B cell (primary cell): ENCODE measurements at regions of chr19 and their contacts with region 1.

Region 1: GRCh38 chr19:2151339-2152229 is at the start of gene AP3D1:
- DNase-seq: peak; percentile 100
- ATAC-seq: peak; percentile 91
- H3K4me3 ChIP-seq: peak within 1 kb of the TSS; percentile 64 to 95 (median 82)
- H3K4me3 Mint-ChIP-seq: peak within 1 kb of the TSS; percentile 83
- H3K27ac ChIP-seq: peak within 1 kb of the TSS; percentile 18 to 90
- H3K27ac Mint-ChIP-seq: peak within 1 kb of the TSS; percentile 90
- H3K4me1 ChIP-seq: peaks cover 18 to 36% of the 10 kb centered on the region in 2 donors
- H3K4me1 Mint-ChIP-seq: peaks cover 37% of the 10 kb centered on the region
- H3K27me3 ChIP-seq: no peaks in the 10 kb centered on the region
- H3K27me3 Mint-ChIP-seq: no peaks in the 10 kb centered on the region
- CTCF ChIP-seq: no peak
- total RNA-seq, gene AP3D1: 96.4 and 108 TPM in 2 replicates

Region 2: GRCh38 chr19:1992759-1993260 is 158.8 kb before region 1 on chr19:
- CTCF ChIA-PET with region 1: no interaction called
- POLR2A ChIA-PET with region 1: no interaction called
- intact Hi-C with region 1: no loop called
- DNase-seq: no peak
- ATAC-seq: no peak
- H3K4me3 ChIP-seq: no peak overlapping the region
- H3K4me3 Mint-ChIP-seq: no peak overlapping the region
- H3K27ac ChIP-seq: no peak overlapping the region
- H3K27ac Mint-ChIP-seq: no peak overlapping the region
- H3K4me1 ChIP-seq: no peaks in the 10 kb centered on the region
- H3K4me1 Mint-ChIP-seq: peaks cover 5% of the 10 kb centered on the region
- H3K27me3 ChIP-seq: no peaks in the 10 kb centered on the region
- H3K27me3 Mint-ChIP-seq: no peaks in the 10 kb centered on the region
- CTCF ChIP-seq: no peak

Region 3: GRCh38 chr19:2016041-2016807 is 135.4 kb before region 1 on chr19:
- CTCF ChIA-PET with region 1: interaction called, 8 read pairs
- POLR2A ChIA-PET with region 1: no interaction called
- intact Hi-C with region 1: loop called (anchors 1 kb)
- DNase-seq: peak; percentile 67
- ATAC-seq: peak; percentile 72
- H3K4me3 ChIP-seq: peak overlapping the region in 3 of 5 experiments; percentile 28 to 44 (median 39)
- H3K4me3 Mint-ChIP-seq: peak overlapping the region; percentile 47
- H3K27ac ChIP-seq: peak overlapping the region in 1 of 2 donors; percentile 7
- H3K27ac Mint-ChIP-seq: peak overlapping the region; percentile 41
- H3K4me1 ChIP-seq: peaks cover 15 to 24% of the 10 kb centered on the region in 2 donors
- H3K4me1 Mint-ChIP-seq: peaks cover 25% of the 10 kb centered on the region
- H3K27me3 ChIP-seq: no peaks in the 10 kb centered on the region
- H3K27me3 Mint-ChIP-seq: no peaks in the 10 kb centered on the region
- CTCF ChIP-seq: no peak

Region 4: DNA sequence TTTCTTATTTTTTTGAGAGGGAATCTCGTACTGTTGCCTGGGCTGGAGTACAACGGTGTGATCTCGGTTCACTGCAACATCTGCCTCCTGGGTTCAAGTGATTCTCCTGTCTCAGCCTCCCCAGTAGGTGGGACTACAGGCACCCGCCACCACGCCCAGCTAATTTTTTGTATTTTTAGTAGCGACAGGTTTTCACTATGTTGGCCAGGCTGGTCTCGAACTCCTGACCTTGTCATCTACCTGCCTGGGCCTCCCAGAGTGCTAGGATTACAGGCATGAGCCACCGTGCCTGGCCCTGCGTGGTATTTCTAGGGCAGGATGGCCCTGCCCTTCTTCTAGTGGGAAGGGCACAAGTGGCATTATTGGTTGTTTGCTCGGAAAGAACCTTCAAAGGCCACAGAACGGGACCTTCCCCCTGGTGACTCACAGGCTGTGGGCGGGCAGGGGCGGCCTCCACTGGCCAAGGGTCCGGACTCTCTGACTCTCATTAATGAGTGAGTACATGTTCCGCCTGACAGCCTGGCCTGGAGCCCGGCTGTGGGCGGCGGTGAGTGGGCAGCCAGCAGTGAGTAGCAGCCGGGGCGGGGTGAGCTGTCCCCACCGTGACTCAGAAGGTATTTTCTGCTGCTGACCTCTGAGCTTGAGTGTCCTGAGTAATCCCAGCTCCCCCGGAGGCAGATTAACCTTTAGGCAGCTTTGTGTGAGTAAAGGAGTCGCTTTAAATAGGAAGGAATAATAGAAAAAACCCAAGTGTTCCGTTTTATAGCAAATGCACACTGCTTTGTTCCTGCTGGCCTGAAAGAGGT is 17.2 kb after region 1 on chr19:
- CTCF ChIA-PET with region 1: interaction called, 22 read pairs
- POLR2A ChIA-PET with region 1: interaction called, 4 read pairs
- intact Hi-C with region 1: loop called (anchors 2 kb)
- DNase-seq: peak; percentile 81
- ATAC-seq: peak; percentile 44
- H3K4me3 ChIP-seq: peak overlapping the region; percentile 16 to 64 (median 37)
- H3K4me3 Mint-ChIP-seq: peak overlapping the region; percentile 88
- H3K27ac ChIP-seq: peak overlapping the region; percentile 90 to 95
- H3K27ac Mint-ChIP-seq: peak overlapping the region; percentile 95
- H3K4me1 ChIP-seq: peaks cover 66 to 88% of the 10 kb centered on the region in 2 donors
- H3K4me1 Mint-ChIP-seq: peaks cover 69% of the 10 kb centered on the region
- H3K27me3 ChIP-seq: no peaks in the 10 kb centered on the region
- H3K27me3 Mint-ChIP-seq: no peaks in the 10 kb centered on the region
- CTCF ChIP-seq: no peak

Region 5: GRCh38 chr19:2221918-2222317 is 70.3 kb after region 1 on chr19:
- CTCF ChIA-PET with region 1: interaction called, 13 read pairs
- POLR2A ChIA-PET with region 1: interaction called, 4 read pairs
- intact Hi-C with region 1: no loop called
- DNase-seq: no peak
- ATAC-seq: no peak
- H3K4me3 ChIP-seq: no peak overlapping the region
- H3K4me3 Mint-ChIP-seq: no peak overlapping the region
- H3K27ac ChIP-seq: no peak overlapping the region
- H3K27ac Mint-ChIP-seq: no peak overlapping the region
- H3K4me1 ChIP-seq: peaks cover 16 to 25% of the 10 kb centered on the region in 2 donors
- H3K4me1 Mint-ChIP-seq: peaks cover 29% of the 10 kb centered on the region
- H3K27me3 ChIP-seq: no peaks in the 10 kb centered on the region
- H3K27me3 Mint-ChIP-seq: no peaks in the 10 kb centered on the region
- CTCF ChIP-seq: no peak

Region 6: DNA sequence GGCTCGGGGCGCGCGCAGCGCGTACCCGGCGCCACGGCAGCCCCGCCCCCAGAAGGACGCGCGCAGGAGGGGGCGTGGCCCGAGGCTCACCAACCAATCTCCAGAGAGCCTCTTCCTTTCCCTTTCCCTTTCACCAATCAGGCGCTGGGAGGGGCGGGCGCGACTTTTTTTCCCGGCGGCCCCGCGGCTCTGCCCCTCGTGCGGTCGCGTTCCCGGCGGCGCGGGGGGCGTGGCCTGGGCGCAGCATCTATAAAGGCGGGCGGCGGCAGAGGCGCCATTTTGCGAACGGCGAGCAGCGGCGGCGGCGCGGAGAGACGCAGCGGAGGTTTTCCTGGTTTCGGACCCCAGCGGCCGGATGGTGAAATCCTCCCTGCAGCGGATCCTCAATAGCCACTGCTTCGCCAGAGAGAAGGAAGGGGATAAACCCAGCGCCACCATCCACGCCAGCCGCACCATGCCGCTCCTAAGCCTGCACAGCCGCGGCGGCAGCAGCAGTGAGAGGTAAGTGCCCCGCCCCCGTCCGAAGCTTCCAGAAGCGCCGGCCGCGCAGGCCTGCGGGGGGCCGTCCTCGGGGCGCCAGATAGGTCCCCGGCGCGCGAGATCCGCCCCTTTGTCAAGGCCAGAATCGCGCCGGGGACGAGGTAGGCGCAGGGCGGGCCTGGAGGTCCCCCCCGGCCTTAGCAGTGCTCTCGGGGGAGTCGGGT is 117.8 kb after region 1 on chr19:
- CTCF ChIA-PET with region 1: interaction called, 12 read pairs
- POLR2A ChIA-PET with region 1: interaction called, 5 read pairs
- intact Hi-C with region 1: loop called (anchors 1 kb)
- DNase-seq: peak; percentile 99
- ATAC-seq: peak; percentile 66
- H3K4me3 ChIP-seq: peak overlapping the region; percentile 59 to 100 (median 99)
- H3K4me3 Mint-ChIP-seq: peak overlapping the region; percentile 89
- H3K27ac ChIP-seq: peak overlapping the region; percentile 79 to 94
- H3K27ac Mint-ChIP-seq: peak overlapping the region; percentile 97
- H3K4me1 ChIP-seq: peaks cover 56 to 66% of the 10 kb centered on the region in 2 donors
- H3K4me1 Mint-ChIP-seq: peaks cover 52% of the 10 kb centered on the region
- H3K27me3 ChIP-seq: no peaks in the 10 kb centered on the region
- H3K27me3 Mint-ChIP-seq: no peaks in the 10 kb centered on the region
- CTCF ChIP-seq: no peak

Region 7: GRCh38 chr19:2280633-2281264 is 129.2 kb after region 1 on chr19:
- CTCF ChIA-PET with region 1: no interaction called
- POLR2A ChIA-PET with region 1: no interaction called
- intact Hi-C with region 1: no loop called
- DNase-seq: no peak
- ATAC-seq: no peak
- H3K4me3 ChIP-seq: no peak overlapping the region
- H3K4me3 Mint-ChIP-seq: no peak overlapping the region
- H3K27ac ChIP-seq: no peak overlapping the region
- H3K27ac Mint-ChIP-seq: no peak overlapping the region
- H3K4me1 ChIP-seq: peaks cover 16 to 35% of the 10 kb centered on the region in 2 donors
- H3K4me1 Mint-ChIP-seq: peaks cover 28% of the 10 kb centered on the region
- H3K27me3 ChIP-seq: no peaks in the 10 kb centered on the region
- H3K27me3 Mint-ChIP-seq: no peaks in the 10 kb centered on the region
- CTCF ChIP-seq: no peak

Region 8: DNA sequence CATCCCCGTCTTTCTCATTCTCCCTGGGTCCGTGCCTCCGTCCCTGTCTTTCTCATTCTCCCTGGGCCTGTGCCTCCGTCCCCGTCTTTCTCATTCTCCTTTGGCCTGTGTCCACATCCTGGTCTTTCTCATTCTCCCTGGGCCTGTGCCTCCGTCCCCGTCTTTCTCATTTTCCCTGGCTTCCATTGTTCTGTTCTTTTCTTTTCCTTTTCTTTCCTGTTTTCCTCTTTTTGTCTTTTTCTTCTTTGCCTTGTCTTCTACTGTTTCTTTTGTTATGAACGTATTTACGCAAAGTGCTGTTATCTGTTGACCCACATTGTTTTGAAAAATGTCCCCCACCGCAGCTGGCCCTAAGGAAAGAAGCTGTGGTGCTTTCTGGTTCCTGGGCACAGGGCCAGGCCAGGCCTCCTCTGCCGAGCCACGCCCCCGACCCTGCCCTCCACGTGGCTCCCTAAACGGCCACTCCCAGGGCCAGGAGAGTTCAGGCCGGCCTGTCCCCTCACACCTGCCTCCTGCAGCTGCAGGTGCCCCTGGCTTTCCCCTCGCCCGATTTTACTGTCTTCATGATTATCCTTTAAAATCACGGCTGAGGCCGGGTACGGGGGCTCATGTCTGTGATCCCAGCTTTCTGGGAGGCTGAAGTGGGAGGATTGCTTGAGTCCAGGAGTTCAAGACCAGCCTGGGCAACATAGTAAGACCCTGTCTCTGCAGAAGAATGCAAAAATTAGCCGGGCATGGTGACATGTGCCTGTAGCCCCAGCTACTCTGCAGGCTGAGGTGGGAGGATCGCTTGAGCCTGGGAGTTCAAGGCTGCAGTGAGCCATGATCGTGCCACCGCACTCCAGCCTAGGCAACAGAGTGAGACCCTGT is 194.4 kb after region 1 on chr19:
- CTCF ChIA-PET with region 1: no interaction called
- POLR2A ChIA-PET with region 1: no interaction called
- intact Hi-C with region 1: no loop called
- DNase-seq: no peak
- ATAC-seq: no peak
- H3K4me3 ChIP-seq: no peak overlapping the region
- H3K4me3 Mint-ChIP-seq: no peak overlapping the region
- H3K27ac ChIP-seq: no peak overlapping the region
- H3K27ac Mint-ChIP-seq: peak overlapping the region; percentile 6
- H3K4me1 ChIP-seq: no peaks in the 10 kb centered on the region
- H3K4me1 Mint-ChIP-seq: no peaks in the 10 kb centered on the region
- H3K27me3 ChIP-seq: no peaks in the 10 kb centered on the region
- H3K27me3 Mint-ChIP-seq: no peaks in the 10 kb centered on the region
- CTCF ChIP-seq: no peak

Region 9: GRCh38 chr19:2380567-2380966 is 229.0 kb after region 1 on chr19:
- CTCF ChIA-PET with region 1: no interaction called
- POLR2A ChIA-PET with region 1: no interaction called
- intact Hi-C with region 1: no loop called
- DNase-seq: no peak
- ATAC-seq: no peak
- H3K4me3 ChIP-seq: no peak overlapping the region
- H3K4me3 Mint-ChIP-seq: no peak overlapping the region
- H3K27ac ChIP-seq: no peak overlapping the region
- H3K27ac Mint-ChIP-seq: no peak overlapping the region
- H3K4me1 ChIP-seq: peaks cover 6 to 11% of the 10 kb centered on the region in 2 donors
- H3K4me1 Mint-ChIP-seq: peaks cover 11% of the 10 kb centered on the region
- H3K27me3 ChIP-seq: peaks cover 0 to 5% (median 0%) of the 10 kb centered on the region in 4 experiments
- H3K27me3 Mint-ChIP-seq: no peaks in the 10 kb centered on the region
- CTCF ChIP-seq: no peak

Region 10: GRCh38 chr19:2391118-2391725 is 239.6 kb after region 1 on chr19:
- CTCF ChIA-PET with region 1: interaction called, 5 read pairs
- POLR2A ChIA-PET with region 1: interaction called, 3 read pairs
- intact Hi-C with region 1: loop called (anchors 5 kb)
- DNase-seq: peak; percentile 82
- ATAC-seq: peak; percentile 51
- H3K4me3 ChIP-seq: no peak overlapping the region
- H3K4me3 Mint-ChIP-seq: peak overlapping the region; percentile 61
- H3K27ac ChIP-seq: no peak overlapping the region
- H3K27ac Mint-ChIP-seq: peak overlapping the region; percentile 70
- H3K4me1 ChIP-seq: peaks cover 16 to 31% of the 10 kb centered on the region in 2 donors
- H3K4me1 Mint-ChIP-seq: peaks cover 32% of the 10 kb centered on the region
- H3K27me3 ChIP-seq: no peaks in the 10 kb centered on the region
- H3K27me3 Mint-ChIP-seq: no peaks in the 10 kb centered on the region
- CTCF ChIP-seq: peak; percentile 92